Right cardiac atrium (tissue), 5 donors: ENCODE measurements at regions of chr5 and their contacts with region 1.

Region 1: DNA sequence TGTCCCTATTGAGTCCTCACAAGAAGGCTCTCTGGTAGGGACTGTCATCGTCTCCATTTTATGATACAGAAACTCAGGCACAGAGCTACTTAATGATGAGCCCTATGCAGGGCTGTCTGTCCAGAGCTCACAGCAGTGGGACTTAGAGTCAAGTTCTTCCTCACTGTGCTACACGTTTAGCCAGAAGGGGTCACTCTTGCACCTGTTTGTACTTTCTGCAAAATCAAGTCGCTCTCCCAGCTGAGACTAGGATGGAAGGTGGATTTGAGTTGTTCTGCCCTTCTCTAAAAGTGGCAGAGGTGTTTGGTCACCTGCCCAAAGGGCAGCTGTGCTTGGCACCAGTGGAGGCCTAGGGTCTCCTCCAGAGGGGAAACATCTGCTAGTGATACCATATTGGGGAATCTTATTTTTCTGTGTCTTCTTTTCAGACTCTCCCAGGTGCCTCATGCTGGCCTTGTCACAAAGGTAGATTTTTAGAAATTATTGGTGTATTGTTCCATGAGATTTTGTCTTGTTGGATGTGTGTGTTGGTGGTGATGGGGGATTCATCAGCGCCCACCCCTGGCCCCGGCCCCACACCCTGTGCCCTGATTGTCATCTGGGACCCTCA is 104.2 kb downstream of the PPARGC1B start:
- DNase-seq: no peak
- ATAC-seq: peak; percentile 53 to 54
- H3K4me3 ChIP-seq: no peak overlapping the region
- H3K27ac ChIP-seq: no peak overlapping the region
- H3K4me1 ChIP-seq: no peaks in the 10 kb centered on the region
- H3K27me3 ChIP-seq: no peaks in the 10 kb centered on the region

Region 2: DNA sequence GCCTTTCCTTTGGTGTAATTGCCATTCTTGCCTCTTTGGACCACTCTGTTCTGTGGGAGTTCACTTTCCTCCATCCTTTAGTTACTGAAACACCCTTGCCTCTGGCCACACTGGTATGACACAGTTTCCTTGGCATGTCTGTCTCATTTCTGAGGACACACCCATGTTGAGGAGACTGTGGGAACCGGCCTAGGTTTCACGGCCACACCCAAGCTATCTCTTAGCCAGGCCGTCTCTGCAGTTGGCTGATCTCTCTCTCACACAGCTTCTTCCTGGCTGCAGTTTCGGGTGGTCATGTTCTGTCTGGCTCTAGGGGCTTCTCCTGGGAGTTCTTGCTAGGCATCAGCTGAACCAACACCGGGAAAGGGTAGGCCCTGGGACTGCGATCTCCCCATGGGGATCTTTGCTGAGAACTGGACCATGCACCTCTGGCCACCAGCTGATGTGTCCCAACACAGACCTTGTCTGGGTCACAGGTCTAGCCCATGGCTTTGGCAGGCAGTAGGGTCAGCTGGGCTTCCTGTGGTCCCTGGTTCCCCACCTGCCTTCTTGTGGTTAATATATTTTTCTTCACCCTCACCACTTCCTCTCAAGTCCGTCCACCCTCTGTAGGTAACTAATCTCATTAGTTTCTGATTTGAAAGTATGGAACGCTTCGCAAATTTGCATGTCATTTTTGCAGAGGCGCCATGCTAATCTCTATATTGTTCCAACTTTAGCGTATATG is 228.2 kb before region 1 on chr5:
- intact Hi-C with region 1: no loop called
- DNase-seq: peak in 2 of 3 donors; percentile 69 to 74
- ATAC-seq: peak; percentile 91 to 97
- H3K4me3 ChIP-seq: no peak overlapping the region
- H3K27ac ChIP-seq: peak overlapping the region; percentile 6
- H3K4me1 ChIP-seq: peaks cover 5% of the 10 kb centered on the region
- H3K27me3 ChIP-seq: no peaks in the 10 kb centered on the region

Region 3: GRCh38 chr5:149913436-149914419 is 79.4 kb after region 1 on chr5:
- intact Hi-C with region 1: no loop called
- DNase-seq: no peak
- ATAC-seq: no peak
- H3K4me3 ChIP-seq: no peak overlapping the region
- H3K27ac ChIP-seq: no peak overlapping the region
- H3K4me1 ChIP-seq: peaks cover 2% of the 10 kb centered on the region
- H3K27me3 ChIP-seq: no peaks in the 10 kb centered on the region

Region 4: GRCh38 chr5:149960272-149961185 is 126.2 kb after region 1 on chr5 and contains the start of gene SLC26A2:
- intact Hi-C with region 1: loop called in 1 of 4 experiments (anchors 10 kb)
- DNase-seq: peak; percentile 97 to 99 (median 98)
- ATAC-seq: peak; percentile 100
- H3K4me3 ChIP-seq: peak within 1 kb of the TSS; percentile 54
- H3K27ac ChIP-seq: peak within 1 kb of the TSS; percentile 65
- H3K4me1 ChIP-seq: no peaks in the 10 kb centered on the region
- H3K27me3 ChIP-seq: no peaks in the 10 kb centered on the region
- total RNA-seq, gene SLC26A2: 5.1 to 10.4 (median 6.5) TPM

Region 5: GRCh38 chr5:149990518-149991376 is 156.4 kb after region 1 on chr5:
- intact Hi-C with region 1: loop called (anchors 5 to 10 kb)
- DNase-seq: peak; percentile 62 to 76 (median 70)
- ATAC-seq: peak; percentile 75 to 78
- H3K4me3 ChIP-seq: no peak overlapping the region
- H3K27ac ChIP-seq: no peak overlapping the region
- H3K4me1 ChIP-seq: no peaks in the 10 kb centered on the region
- H3K27me3 ChIP-seq: no peaks in the 10 kb centered on the region

Region 6: DNA sequence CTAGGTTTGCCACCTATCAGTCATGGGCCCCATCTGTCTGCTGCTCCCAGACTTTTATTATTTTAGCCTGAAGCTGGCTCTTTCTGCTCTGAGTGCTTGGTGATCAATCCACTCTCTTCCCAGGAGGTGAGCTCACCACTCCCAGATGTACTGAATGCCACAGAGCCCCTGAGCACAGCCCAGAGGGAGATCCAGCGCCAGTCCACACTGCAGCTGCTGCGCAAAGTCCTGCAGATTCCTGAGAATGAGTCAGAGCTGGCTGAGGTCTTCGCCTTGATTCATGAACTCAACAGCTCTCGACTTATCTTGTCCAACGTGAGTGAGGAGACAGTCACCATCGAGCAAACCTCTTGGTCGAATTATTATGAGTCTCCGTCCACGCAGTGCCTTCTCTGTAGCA is 202.2 kb after region 1 on chr5:
- intact Hi-C with region 1: no loop called
- DNase-seq: peak; percentile 64 to 69 (median 69)
- ATAC-seq: peak; percentile 87 to 88
- H3K4me3 ChIP-seq: no peak overlapping the region
- H3K27ac ChIP-seq: no peak overlapping the region
- H3K4me1 ChIP-seq: no peaks in the 10 kb centered on the region
- H3K27me3 ChIP-seq: no peaks in the 10 kb centered on the region